Vagina (tissue), 2 donors: ENCODE measurements at regions of chr5 and their contacts with region 1.

Region 1: DNA sequence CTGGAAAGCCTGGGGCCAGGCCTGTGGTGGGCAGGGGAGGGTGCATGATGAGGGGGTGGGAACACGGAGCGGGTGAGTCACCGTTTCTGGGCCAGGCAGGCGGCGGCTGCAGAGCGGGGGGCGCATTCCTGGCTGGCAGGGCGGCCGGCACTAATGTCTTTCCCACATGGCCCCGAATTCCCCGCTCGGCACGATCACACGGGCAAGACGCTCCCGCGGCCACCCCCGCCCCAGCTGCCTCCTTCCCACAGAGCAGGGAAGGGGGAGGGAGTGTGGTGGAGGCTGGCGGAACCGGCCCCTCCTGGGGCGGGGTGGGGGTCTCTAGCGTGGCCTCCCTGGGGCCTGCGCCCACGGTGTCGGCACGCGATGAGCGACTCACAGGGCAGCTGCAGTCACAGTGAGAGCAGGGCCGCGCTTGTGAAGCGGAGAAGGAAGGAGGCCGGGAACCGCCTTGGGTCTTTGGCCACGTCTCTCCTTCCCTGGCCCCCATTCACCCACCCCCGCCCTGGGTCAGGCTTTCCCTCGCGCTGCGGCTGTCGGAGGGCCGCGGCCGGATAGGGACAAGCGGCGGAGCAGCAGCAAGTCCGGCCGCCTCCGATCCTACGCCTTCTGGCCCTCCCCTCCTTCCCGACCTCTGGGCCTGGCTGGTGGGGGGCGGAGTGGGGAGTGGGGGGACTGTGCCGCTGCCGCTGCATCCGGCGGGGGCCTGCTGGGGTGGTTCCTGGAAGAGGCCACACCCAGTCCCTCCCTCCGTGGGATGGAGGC is 48.9 kb downstream of the CXXC5 start:
- DNase-seq: no peak
- H3K4me3 ChIP-seq: peak overlapping the region; percentile 48 to 50
- H3K27ac ChIP-seq: peak overlapping the region; percentile 98
- H3K4me1 ChIP-seq: peaks cover 55% of the 10 kb centered on the region
- H3K27me3 ChIP-seq: no peaks in the 10 kb centered on the region
- CTCF ChIP-seq: no peak
- POLR2A ChIP-seq: peak in 1 of 2 donors; percentile 40

Region 2: DNA sequence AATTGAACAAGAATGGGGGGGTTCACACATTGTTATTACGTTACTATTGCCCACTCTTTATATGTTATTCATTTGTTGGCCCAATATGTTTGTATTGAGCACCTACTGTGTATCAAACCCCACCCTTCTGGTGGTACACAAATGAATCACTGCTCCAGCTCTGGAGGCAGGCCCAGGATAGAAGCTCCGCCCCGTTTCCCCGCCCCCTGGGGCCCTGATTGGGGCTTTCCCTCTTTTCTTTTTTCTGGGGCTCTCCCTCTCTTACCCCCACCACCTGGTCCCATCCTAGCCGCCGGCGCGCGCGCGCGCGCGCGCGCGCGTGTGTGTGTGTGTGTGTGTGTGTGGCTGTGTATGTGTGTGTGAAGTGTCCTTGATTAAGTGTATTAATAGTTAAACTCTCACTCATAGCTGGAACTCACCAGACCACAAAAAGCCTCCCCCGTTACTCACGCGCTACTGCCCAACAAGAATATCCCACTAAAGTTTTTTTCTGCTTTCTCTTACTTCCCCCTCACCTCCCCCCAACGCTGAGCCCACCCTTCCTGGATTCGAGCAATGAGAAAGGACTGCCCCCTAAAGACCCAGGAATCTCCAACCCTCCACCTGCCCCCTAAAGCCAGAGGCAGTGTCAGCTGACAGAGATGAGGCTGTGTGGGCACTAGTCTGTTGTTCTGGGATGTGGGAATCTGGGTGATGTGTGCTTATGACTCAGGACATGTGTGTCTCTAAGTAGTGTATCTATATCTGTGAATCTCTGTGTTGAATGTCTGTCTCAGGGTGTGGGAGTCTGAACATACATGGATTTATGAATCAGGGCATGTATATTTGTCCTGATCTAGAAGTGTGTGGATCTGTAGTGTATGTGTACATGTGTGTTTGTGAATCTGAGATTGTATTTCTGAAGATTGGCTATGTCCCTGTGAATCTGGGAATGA is 45.0 kb before region 1 on chr5:
- intact Hi-C with region 1: loop called (anchors 5 kb)
- DNase-seq: no peak
- H3K4me3 ChIP-seq: peak overlapping the region; percentile 65 to 67
- H3K27ac ChIP-seq: peak overlapping the region; percentile 95
- H3K4me1 ChIP-seq: peaks cover 89% of the 10 kb centered on the region
- H3K27me3 ChIP-seq: no peaks in the 10 kb centered on the region
- CTCF ChIP-seq: no peak
- POLR2A ChIP-seq: no peak

Region 3: GRCh38 chr5:139745800-139746690 is 49.0 kb after region 1 on chr5:
- intact Hi-C with region 1: loop called (anchors 5 kb)
- DNase-seq: no peak
- H3K4me3 ChIP-seq: peak overlapping the region; percentile 47 to 50
- H3K27ac ChIP-seq: peak overlapping the region; percentile 70
- H3K4me1 ChIP-seq: peaks cover 40% of the 10 kb centered on the region
- H3K27me3 ChIP-seq: peaks cover 4% of the 10 kb centered on the region
- CTCF ChIP-seq: no peak
- POLR2A ChIP-seq: no peak

Region 4: GRCh38 chr5:139774980-139775661 is 78.0 kb after region 1 on chr5:
- intact Hi-C with region 1: no loop called
- DNase-seq: no peak
- H3K4me3 ChIP-seq: no peak overlapping the region
- H3K27ac ChIP-seq: no peak overlapping the region
- H3K4me1 ChIP-seq: no peaks in the 10 kb centered on the region
- H3K27me3 ChIP-seq: no peaks in the 10 kb centered on the region
- CTCF ChIP-seq: peak; percentile 69 to 74 (median 74)
- POLR2A ChIP-seq: no peak